ENCODE measurements at regions of chr16 and their contacts with region 1.

Region 1: DNA sequence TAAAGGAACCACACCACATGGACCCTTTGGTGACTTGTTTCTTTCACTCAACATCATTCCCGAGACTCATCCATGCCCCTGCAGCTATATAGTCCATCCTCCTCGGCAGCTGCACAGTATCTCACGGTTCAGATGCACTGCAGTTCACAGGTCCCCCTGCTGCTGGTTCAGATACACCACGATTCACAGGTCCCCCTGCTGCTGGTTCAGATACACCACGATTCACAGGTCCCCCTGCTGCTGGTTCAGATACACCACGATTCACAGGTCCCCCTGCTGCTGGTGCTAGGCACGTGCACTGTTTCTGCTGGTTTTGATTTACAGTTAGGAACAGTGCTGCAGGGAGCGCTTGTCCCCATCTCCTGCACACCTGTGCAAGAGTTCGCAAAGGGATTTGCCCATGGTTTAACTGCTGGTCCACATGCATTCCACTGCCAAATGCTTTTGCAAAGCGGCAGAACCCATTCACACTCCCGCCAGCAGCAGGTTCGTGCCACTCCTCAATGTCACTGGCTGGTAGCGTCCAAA is 3.8 kb downstream of the HSDL1 start:
- DNase-seq: no peak
- H3K4me3 ChIP-seq: no peak overlapping the region
- H3K27ac ChIP-seq: no peak overlapping the region
- H3K4me1 ChIP-seq: no peaks in the 10 kb centered on the region
- H3K27me3 ChIP-seq: no peaks in the 10 kb centered on the region
- CTCF ChIP-seq: no peak
- POLR2A ChIP-seq: no peak

Region 2: DNA sequence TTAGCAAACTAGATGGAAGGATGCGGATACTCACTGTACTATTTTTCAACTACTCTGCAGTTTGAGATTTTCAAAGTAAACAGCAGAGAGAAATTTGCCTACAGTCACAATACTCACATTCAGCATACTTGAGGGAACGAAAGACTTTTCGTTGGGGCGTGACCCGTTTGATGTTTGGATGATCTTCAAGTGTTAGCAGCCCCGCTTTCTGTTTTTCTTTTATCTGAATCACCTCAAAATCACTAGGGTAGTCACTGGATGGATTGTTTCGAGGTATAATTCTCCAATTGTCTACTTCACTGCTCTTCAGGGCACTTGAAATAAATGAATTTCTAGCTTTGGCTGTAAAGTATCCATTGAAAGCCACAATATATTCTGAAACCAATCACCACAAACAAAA is 42.3 kb before region 1 on chr16:
- intact Hi-C with region 1: loop called (anchors 2 kb)
- DNase-seq: no peak
- H3K4me3 ChIP-seq: no peak overlapping the region
- H3K27ac ChIP-seq: peak overlapping the region; percentile 64 to 80
- H3K4me1 ChIP-seq: no peaks in the 10 kb centered on the region
- H3K27me3 ChIP-seq: no peaks in the 10 kb centered on the region
- CTCF ChIP-seq: no peak
- POLR2A ChIP-seq: no peak

Region 3: GRCh38 chr16:84593825-84594724 is 452.9 kb after region 1 on chr16:
- intact Hi-C with region 1: no loop called
- DNase-seq: no peak
- H3K4me3 ChIP-seq: no peak overlapping the region
- H3K27ac ChIP-seq: peak overlapping the region in 1 of 2 donors; percentile 23
- H3K4me1 ChIP-seq: peaks cover 0 to 3% of the 10 kb centered on the region in 2 donors
- H3K27me3 ChIP-seq: no peaks in the 10 kb centered on the region
- CTCF ChIP-seq: no peak
- POLR2A ChIP-seq: no peak